ENCODE measurements at regions of chr4 and their contacts with region 1.

Region 1: DNA sequence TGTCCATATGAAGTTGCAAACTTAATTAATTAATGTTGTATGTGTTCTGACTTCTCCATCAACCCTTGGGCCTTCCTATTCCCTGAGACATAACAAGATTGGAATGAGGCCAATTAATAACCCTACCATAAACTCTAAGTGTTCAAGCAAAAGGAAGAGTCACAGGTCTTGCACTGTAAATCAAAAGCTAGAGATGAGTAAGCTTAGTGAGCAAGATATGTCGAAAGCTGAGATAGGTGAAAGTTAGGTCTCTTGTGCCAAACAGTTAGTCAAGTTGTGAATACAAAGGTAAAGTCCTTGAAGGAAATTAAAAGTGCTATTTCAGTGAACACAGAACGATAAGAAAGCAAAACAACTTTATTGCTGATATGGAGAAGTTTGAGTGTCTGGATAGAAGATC is 58.2 kb upstream of the GPRIN3 start:
- DNase-seq: no peak
- H3K4me3 Mint-ChIP-seq: no peak overlapping the region
- H3K27ac Mint-ChIP-seq: peak overlapping the region; percentile 1
- H3K4me1 Mint-ChIP-seq: peaks cover 8% of the 10 kb centered on the region
- H3K27me3 Mint-ChIP-seq: peaks cover 5% of the 10 kb centered on the region

Region 2: GRCh38 chr4:89324671-89325070 is 41.1 kb before region 1 on chr4:
- intact Hi-C with region 1: loop called (anchors 5 kb)
- DNase-seq: no peak
- H3K4me3 Mint-ChIP-seq: peak overlapping the region; percentile 2
- H3K27ac Mint-ChIP-seq: peak overlapping the region; percentile 76
- H3K4me1 Mint-ChIP-seq: peaks cover 25% of the 10 kb centered on the region
- H3K27me3 Mint-ChIP-seq: no peaks in the 10 kb centered on the region

Region 3: GRCh38 chr4:89549907-89550306 is 184.1 kb after region 1 on chr4:
- intact Hi-C with region 1: no loop called
- DNase-seq: no peak
- H3K4me3 Mint-ChIP-seq: no peak overlapping the region
- H3K27ac Mint-ChIP-seq: no peak overlapping the region
- H3K4me1 Mint-ChIP-seq: no peaks in the 10 kb centered on the region
- H3K27me3 Mint-ChIP-seq: peaks cover 2% of the 10 kb centered on the region

Measured in activated T-helper 1 cell treated with anti-CD3 and anti-CD28 coated beads, Interleukin-12 subunit alpha, Interleukin-12 subunit beta, Interleukin-2, Interleukin-4 antibody, amounts not matched to agents 30 ng/mL and 10 ng/mL and 1 ng/mL, durations not matched to agents 14 hours and 24 hours and 36 hours (primary cell).